GM12878 (cell line): ENCODE measurements at regions of chr12 and their contacts with region 1.

Region 1: GRCh38 chr12:110371408-110372055 is 32.0 kb downstream of the ANAPC7 start:
- DNase-seq: peak; percentile 57
- ATAC-seq: peak; percentile 88
- H3K4me3 ChIP-seq: no peak overlapping the region
- H3K27ac ChIP-seq: peak overlapping the region; percentile 37
- H3K4me1 ChIP-seq: peaks cover 21% of the 10 kb centered on the region
- H3K27me3 ChIP-seq: no peaks in the 10 kb centered on the region
- CTCF ChIP-seq: no peak
- EP300 ChIP-seq: peak; percentile 24 to 65; a peak in 1 of 4 replicates
- POLR2A ChIP-seq: peak; percentile 61
- RAD21 ChIP-seq: no peak

Region 2: DNA sequence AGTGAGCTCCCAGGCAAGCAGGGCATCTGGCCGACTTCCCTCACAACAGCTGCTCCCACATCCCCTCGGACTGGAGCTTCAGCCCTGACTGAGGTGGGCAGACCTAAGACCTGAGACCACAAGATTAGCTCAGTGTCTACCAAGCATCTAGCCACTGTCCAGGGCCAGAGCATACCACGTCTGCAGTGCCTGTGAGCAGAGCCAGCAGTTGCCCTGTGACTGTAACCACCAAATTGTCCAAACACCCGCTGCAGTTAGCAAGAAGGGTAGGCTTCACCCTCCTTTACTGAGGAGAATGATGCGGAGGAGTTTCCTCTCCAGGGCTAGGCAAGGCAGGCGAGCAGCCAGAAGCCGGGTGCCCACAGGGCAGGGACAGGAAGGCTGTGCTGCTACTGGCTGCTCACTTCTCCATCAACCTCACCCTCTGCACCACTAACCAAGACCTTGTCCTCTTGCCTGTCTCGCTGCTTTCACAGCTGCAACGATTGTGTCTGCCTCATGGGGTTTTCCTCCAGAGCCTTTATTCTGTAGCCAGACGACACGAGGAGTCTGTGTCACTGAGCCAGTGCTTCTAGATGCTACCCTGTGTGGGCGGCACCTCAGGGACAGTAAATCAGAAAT is 21.9 kb before region 1 on chr12:
- CTCF ChIA-PET with region 1: interaction called, 4 read pairs
- POLR2A ChIA-PET with region 1: interaction called, 3 read pairs
- RAD21 ChIA-PET with region 1: interaction called, 3 read pairs
- SMC1A ChIA-PET with region 1: interaction called, 13 read pairs
- in situ Hi-C with region 1: no loop called
- intact Hi-C with region 1: no loop called
- DNase-seq: no peak
- ATAC-seq: peak; percentile 44
- H3K4me3 ChIP-seq: no peak overlapping the region
- H3K27ac ChIP-seq: no peak overlapping the region
- H3K4me1 ChIP-seq: no peaks in the 10 kb centered on the region; the same call in 1 of the 2 replicates
- H3K27me3 ChIP-seq: no peaks in the 10 kb centered on the region
- CTCF ChIP-seq: no peak
- EP300 ChIP-seq: no peak
- POLR2A ChIP-seq: peak; percentile 81
- RAD21 ChIP-seq: no peak

Region 3: DNA sequence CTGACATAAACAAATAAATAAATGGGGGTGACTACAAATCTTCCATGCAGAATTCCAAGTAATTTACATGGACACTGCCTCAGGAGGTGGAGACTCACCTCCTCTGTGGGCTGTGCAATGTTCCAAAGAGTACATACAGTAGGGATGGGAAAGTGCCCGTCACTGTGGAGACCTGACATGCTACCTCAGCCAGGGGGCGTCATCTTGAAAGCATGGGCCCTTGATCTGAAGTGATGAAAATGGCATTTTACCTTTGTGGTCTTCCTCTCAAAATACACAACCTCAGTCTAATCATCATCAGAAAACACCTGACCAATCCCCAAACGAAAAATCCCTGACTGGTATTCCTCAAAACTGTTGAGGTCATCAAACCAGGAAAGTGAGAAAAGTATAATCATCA is 16.5 kb before region 1 on chr12:
- CTCF ChIA-PET with region 1: interaction called, 4 read pairs
- POLR2A ChIA-PET with region 1: interaction called, 3 read pairs
- RAD21 ChIA-PET with region 1: interaction called, 5 read pairs
- SMC1A ChIA-PET with region 1: interaction called, 13 read pairs
- in situ Hi-C with region 1: no loop called
- intact Hi-C with region 1: no loop called
- DNase-seq: no peak
- ATAC-seq: peak; percentile 85
- H3K4me3 ChIP-seq: no peak overlapping the region
- H3K27ac ChIP-seq: no peak overlapping the region
- H3K4me1 ChIP-seq: no peaks in the 10 kb centered on the region; the same call in 1 of the 2 replicates
- H3K27me3 ChIP-seq: no peaks in the 10 kb centered on the region
- CTCF ChIP-seq: peak; percentile 63 to 71 (median 66); a peak in 5 of 6 replicates
- EP300 ChIP-seq: no peak
- POLR2A ChIP-seq: no peak
- RAD21 ChIP-seq: peak; percentile 57